HCT116 (cell line): ENCODE measurements at regions of chr16 and their contacts with region 1.

Region 1: GRCh38 chr16:495127-495748 is 32.3 kb upstream of the CAPN15 start:
- DNase-seq: no peak
- ATAC-seq: peak; percentile 84
- H3K4me3 ChIP-seq: no peak overlapping the region
- H3K27ac ChIP-seq: no peak overlapping the region
- H3K4me1 ChIP-seq: no peaks in the 10 kb centered on the region
- H3K27me3 ChIP-seq: no peaks in the 10 kb centered on the region
- CTCF ChIP-seq: peak in 2 of 3 experiments; percentile 30 to 46; a peak in 4 of 6 replicates
- POLR2A ChIP-seq: no peak
- RAD21 ChIP-seq: no peak

Region 2: DNA sequence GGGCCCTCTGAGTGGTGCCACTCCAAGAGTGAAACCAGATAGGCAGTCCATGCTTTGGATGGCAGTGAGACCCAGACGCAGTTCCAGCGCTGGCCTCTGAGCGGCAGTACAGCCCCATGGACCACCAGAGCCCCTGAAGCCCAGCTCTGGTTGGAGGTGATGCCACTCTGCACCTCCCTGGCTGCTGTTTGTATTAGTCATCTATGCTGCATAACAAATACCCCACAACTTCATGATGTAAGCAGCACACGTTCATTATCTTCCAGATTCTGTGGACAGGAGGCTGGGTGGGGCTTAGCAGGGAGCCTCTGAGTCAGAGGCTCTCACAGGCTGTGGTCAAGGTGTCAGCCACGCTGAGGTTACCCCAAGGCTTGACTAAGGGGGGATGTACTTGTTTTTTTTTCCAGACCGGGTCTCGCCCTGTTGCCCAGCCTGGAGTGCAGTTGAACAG is 103.3 kb before region 1 on chr16:
- CTCF ChIA-PET with region 1: interaction called, 3 read pairs
- POLR2A ChIA-PET with region 1: no interaction called
- RAD21 ChIA-PET with region 1: no interaction called
- intact Hi-C with region 1: loop called (anchors 10 kb)
- DNase-seq: no peak
- ATAC-seq: peak; percentile 84
- H3K4me3 ChIP-seq: no peak overlapping the region
- H3K27ac ChIP-seq: no peak overlapping the region
- H3K4me1 ChIP-seq: peaks cover 3 to 9% of the 10 kb centered on the region in 2 experiments; a peak in 2 of 4 replicates
- H3K27me3 ChIP-seq: no peaks in the 10 kb centered on the region
- CTCF ChIP-seq: peak; percentile 28 to 79 (median 74); a peak in 5 of 6 replicates
- POLR2A ChIP-seq: no peak
- RAD21 ChIP-seq: peak; percentile 74

Region 3: DNA sequence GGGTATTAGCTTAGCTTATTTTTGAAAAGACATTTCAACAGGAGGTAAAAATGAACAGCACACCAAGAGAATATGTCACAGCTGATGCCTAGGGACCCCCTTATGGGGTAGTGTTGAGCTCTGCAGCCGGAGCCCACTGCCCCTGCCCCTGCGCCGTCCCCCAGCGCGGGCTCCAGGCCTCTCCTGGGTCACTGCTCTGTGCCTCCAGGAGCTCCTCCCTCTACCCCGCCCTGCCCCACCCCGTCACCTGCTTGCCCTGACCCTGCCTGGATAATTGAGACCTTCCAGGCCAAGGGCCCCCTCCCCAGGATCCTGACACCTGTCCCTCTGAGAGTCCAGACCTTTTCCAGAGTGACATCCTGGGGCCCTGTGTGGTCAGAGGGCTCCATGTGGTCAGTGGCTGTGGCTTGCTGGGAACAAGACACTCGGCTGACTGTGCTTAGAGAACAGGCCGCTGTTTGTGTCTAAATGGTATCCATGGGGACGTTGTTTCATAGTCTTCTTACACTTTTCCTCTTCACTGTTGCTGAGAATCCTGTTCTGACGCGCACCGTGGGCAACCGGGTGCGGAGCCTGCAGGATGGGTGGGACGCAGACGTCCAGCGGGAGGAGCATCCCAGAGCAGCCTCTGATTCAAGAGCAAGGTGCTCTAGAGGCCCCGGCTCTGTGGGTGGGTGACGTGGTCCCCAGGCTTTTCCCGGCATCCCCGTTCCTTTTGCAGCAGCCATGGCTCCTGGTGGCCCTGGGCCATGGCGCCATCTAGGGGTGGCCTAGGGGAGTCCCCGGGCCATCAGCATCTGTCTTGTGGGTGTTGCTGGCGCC is 115.5 kb after region 1 on chr16:
- CTCF ChIA-PET with region 1: no interaction called
- POLR2A ChIA-PET with region 1: no interaction called
- RAD21 ChIA-PET with region 1: no interaction called
- intact Hi-C with region 1: no loop called
- DNase-seq: no peak
- ATAC-seq: peak; percentile 81
- H3K4me3 ChIP-seq: no peak overlapping the region
- H3K27ac ChIP-seq: no peak overlapping the region
- H3K4me1 ChIP-seq: no peaks in the 10 kb centered on the region
- H3K27me3 ChIP-seq: no peaks in the 10 kb centered on the region
- CTCF ChIP-seq: peak; percentile 14 to 65 (median 50); a peak in 5 of 6 replicates
- POLR2A ChIP-seq: no peak
- RAD21 ChIP-seq: peak; percentile 46